WTC11 (cell line): ENCODE measurements at regions of chr7 and their contacts with region 1.

Region 1: DNA sequence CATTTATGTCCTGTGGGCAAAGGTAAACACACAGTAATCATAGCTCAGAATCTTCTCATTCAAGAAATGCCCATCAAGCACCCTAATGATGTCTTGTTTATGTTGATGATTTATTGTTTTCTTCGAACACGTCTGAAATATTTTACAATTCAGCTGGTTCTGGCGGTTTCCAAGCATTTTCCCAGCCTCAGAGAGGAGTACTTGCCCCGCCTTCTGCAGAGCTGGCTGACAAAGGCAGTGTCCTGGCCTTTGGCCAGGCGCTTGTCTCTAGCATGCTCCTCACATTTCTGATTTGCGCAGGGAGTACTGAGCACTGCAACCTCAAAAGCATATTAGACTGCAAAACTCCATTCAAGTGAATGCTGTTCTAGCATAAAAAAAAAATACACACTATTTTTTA is 314.2 kb upstream of the GNAI1 start:
- DNase-seq: no peak
- ATAC-seq: peak; percentile 55; the same call in 1 of the 2 replicates
- H3K4me3 Mint-ChIP-seq: no peak overlapping the region
- H3K27ac Mint-ChIP-seq: no peak overlapping the region
- H3K4me1 Mint-ChIP-seq: no peaks in the 10 kb centered on the region
- H3K27me3 Mint-ChIP-seq: no peaks in the 10 kb centered on the region
- CTCF ChIP-seq: no peak

Region 2: GRCh38 chr7:79664884-79665676 is 155.3 kb before region 1 on chr7:
- CTCF ChIA-PET with region 1: no interaction called
- POLR2A ChIA-PET with region 1: interaction called, 12 read pairs
- DNase-seq: no peak
- ATAC-seq: no peak
- H3K4me3 Mint-ChIP-seq: no peak overlapping the region
- H3K27ac Mint-ChIP-seq: no peak overlapping the region
- H3K4me1 Mint-ChIP-seq: 0 out of 2 replicates have a peak, but pooled peaks cover 5% of the 10 kb centered on the region
- H3K27me3 Mint-ChIP-seq: peaks cover 83% of the 10 kb centered on the region
- CTCF ChIP-seq: no peak

Region 3: DNA sequence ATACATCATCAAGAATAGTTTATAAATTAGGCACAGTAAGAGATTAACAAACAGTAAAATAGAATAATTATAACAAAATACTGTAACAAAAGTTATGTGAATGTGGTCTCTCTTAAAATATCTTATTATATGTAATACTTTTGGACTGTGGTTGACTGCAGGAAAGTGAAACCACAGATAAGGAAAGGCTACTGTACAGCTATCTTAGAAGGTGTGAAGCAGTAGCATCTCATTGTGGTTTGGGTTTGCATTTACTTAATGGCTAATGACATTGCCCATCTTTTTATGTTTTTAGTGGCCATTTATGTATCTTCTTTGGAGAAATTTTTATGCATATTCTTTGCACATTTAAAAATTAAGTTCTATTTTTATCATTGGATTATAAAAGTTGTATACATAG is 70.5 kb before region 1 on chr7:
- CTCF ChIA-PET with region 1: no interaction called
- POLR2A ChIA-PET with region 1: no interaction called
- DNase-seq: no peak
- ATAC-seq: no peak
- H3K4me3 Mint-ChIP-seq: no peak overlapping the region
- H3K27ac Mint-ChIP-seq: no peak overlapping the region
- H3K4me1 Mint-ChIP-seq: no peaks in the 10 kb centered on the region
- H3K27me3 Mint-ChIP-seq: no peaks in the 10 kb centered on the region; the same call in 1 of the 2 replicates
- CTCF ChIP-seq: no peak